ENCODE measurements at regions of chr1 and their contacts with region 1.

Region 1: DNA sequence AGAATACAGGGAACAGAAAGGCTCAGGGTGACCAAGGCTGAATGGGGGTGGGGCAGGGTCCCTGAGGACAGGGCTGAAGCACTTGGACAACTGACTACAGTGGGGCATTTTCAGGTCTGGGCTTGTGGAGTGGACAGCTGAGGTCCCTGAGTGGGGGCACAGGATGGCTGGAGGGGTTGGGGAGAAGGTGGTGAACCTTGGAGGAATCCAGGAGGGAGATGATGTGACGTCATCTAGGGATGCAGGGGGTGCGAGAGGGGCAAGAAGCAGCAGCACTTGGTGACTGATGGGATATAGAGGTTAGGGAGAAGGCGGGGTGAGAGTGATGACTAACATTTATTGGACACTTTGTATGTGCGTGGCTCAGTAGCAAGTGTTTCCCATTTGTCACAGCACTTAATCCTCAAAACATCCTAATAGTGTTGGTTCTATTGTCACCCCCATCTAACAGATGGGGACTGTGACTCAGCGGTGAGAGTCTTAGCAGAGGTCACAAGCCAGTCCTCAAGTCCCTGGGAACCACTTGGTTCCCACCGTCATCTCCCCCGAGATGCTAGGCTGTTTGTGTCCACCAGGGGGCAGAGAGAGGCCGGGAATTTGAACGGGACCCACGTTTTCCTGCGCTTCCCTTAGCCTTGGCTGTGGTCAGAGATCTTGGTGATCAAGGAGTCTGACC is 27.9 kb upstream of the BMP8B start:
- DNase-seq: peak; percentile 75
- ATAC-seq: peak; percentile 86 to 87

Region 2: GRCh38 chr1:39901698-39902459 is 85.3 kb after region 1 on chr1 and contains the start of gene MYCL:
- intact Hi-C with region 1: loop called (anchors 2 to 5 kb)
- DNase-seq: peak; percentile 67
- ATAC-seq: peak; percentile 84
- total RNA-seq, gene MYCL: 0.76 to 0.77 TPM

Region 3: GRCh38 chr1:39973503-39974135 is 157.1 kb after region 1 on chr1:
- intact Hi-C with region 1: loop called (anchors 2 to 5 kb)
- DNase-seq: peak; percentile 76
- ATAC-seq: peak; percentile 83 to 89

Region 4: DNA sequence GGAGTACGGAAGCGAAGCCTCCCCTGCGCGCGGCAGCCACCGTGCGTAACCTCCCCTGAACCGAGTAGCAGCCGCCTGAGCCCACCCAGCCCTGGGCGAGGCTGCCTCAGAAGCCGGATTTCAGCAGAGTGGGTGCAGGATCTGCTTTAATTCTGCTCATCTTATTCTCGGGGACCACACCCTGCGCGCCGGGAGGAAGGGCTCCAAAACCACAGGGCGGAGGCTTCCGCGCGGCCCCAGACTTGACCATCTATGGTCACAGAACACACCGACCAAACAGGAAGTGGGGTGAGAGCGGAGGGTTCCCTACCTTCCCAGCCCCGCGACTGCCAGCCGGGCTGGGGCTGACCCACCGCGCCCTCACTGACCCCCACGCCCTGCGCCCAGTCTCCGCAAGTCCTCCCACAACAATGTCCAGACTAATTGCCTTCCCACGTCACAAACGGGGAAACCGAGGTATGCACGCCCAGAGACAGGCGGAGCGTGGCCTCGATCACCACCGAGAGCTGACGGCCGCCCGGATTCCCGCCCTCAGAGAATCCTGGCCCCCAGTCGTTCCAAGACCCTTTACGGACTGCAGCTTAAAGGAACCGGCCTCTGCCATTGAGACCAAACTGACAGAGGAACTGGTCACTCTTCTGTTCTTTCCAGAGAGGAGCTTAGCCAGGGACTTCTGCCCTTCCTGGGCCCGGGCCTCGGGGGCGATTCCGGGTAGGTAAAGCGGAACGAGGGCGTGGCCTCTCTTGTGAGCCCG is 223.4 kb after region 1 on chr1:
- intact Hi-C with region 1: loop called in 1 of 2 experiments (anchors 10 kb)
- DNase-seq: peak; percentile 94
- ATAC-seq: peak; percentile 76 to 83

Measured in left cardiac atrium (tissue), 4 donors.